Activated CD8-positive, alpha-beta T cell treated with anti-CD3 and anti-CD28 coated beads, Interleukin-2, amount 10 ng/mL, durations not matched to agents 7 days and 5 days (primary cell): ENCODE measurements at regions of chr2 and their contacts with region 1.

Region 1: GRCh38 chr2:27409321-27410073 is at the start of gene PPM1G:
- DNase-seq: peak; percentile 97
- ATAC-seq: peak; percentile 96
- H3K4me3 Mint-ChIP-seq: peak within 1 kb of the TSS; percentile 83
- H3K27ac Mint-ChIP-seq: peak within 1 kb of the TSS; percentile 89
- H3K4me1 Mint-ChIP-seq: peaks cover 34% of the 10 kb centered on the region
- H3K27me3 Mint-ChIP-seq: peaks cover 8% of the 10 kb centered on the region
- total RNA-seq, gene PPM1G: 130 to 136 TPM

Region 2: DNA sequence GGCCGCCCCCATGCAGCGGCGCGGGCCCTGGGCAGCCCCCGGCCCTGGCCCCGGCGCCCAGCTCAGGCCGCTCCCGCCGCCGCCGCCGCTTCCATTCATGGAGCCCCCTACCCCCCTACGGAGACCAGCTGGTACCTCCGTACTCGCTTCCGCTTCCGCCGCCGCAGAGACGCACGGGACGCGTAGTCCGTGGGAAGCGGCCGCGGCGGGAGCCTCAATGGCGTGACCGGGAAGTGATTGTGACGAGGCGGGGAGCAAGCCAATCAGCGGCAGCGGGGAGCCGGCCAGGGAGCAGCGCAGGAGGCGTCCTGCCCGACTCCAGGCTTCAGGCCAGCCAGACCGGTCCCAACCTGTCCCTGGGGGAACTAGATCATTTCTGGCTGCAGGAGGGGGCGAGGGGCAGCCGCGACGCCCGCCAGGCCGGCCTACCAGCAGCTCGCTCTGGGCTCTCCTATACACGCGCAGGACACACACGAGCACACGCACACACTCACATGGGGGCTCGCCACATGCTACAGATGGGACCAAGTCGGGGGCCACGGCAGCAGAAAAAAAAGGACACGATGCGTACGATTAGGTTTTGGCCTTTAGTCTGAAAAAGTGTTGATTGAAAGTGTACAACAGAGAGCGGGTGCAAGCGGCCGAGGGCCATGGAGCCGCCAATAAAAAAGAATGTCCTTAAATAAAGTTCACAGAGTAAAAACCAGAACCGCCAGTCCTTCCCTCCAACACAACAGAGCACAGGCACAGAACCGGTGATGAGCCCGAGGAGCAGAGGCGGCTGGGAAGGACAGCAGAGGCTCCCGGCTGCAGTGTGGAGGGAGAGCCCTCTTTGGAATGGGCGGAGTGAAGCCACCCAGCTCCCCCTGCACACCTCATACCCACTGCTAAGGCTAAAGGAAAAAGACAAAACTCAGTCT is 28.6 kb before region 1 on chr2 and contains the start of gene ZNF513:
- CTCF ChIA-PET with region 1: interaction called, 4 read pairs
- POLR2A ChIA-PET with region 1: interaction called, 15 read pairs
- DNase-seq: peak; percentile 90
- ATAC-seq: peak; percentile 85
- H3K4me3 Mint-ChIP-seq: peak within 1 kb of the TSS; percentile 90
- H3K27ac Mint-ChIP-seq: peak within 1 kb of the TSS; percentile 97
- H3K4me1 Mint-ChIP-seq: peaks cover 33% of the 10 kb centered on the region
- H3K27me3 Mint-ChIP-seq: no peaks in the 10 kb centered on the region
- total RNA-seq, gene ZNF513: 11.8 to 13.3 TPM

Region 3: DNA sequence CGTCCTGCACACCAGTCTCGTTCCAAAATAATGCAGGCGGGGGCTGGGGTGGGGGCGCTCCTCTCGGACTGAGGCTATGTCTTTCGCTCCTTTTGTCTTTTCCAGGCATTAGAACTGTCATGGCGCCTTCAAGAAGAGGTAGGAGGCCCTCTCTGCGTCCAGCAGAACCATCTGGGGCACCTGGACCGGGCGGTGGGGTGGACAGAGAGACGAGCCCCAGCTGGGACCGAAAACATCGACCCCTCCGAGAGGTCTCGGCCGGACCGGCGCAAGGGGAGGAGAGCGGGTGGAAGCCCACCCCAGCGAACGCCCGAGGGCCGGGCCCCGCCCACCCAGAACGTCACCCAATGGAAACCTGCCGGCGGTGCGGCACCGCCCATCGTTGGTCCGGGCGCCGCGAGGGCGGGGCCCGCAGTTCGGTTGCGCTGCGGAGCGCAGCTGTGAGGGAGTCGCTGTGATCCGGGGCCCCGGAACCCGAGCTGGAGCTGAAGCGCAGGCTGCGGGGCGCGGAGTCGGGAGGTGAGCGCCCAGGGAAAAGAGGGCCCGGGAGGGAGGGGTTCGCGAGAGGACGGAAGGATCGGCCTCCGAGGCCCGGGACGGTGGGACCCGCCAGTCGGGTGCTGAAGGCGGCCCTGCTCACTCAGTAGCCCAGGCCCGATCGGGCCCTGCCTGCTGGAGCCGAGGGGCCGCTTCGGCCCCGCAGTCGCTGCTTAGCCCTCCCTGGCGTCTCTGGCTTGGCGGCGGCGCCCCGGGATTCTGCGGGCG is 18.9 kb after region 1 on chr2 and contains the start of gene NRBP1:
- CTCF ChIA-PET with region 1: interaction called, 38 read pairs
- POLR2A ChIA-PET with region 1: interaction called, 41 read pairs
- DNase-seq: peak; percentile 93
- ATAC-seq: peak; percentile 92
- H3K4me3 Mint-ChIP-seq: peak within 1 kb of the TSS; percentile 99
- H3K27ac Mint-ChIP-seq: peak within 1 kb of the TSS; percentile 98
- H3K4me1 Mint-ChIP-seq: peaks cover 31% of the 10 kb centered on the region
- H3K27me3 Mint-ChIP-seq: no peaks in the 10 kb centered on the region
- total RNA-seq, gene NRBP1: 91.2 to 91.3 TPM

Region 4: DNA sequence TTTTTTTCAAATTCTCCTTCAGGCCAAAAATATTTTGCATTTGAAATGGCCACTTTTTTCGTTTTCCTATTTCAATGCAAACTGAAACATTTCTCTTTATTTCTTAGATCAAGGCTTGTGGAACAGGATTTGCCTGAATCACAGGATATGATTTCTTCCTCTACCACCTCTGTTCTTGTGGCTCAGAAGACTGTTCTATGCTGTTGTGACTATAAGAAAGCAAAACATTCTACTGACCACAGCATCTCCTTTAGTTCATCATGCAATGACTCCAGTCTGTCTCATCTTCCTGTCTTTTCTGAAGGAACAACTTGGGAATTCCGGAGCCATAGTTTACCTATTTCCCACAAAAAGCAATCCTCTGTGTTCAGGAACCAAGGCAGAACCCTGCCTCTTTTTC is 157.1 kb after region 1 on chr2:
- CTCF ChIA-PET with region 1: no interaction called
- POLR2A ChIA-PET with region 1: no interaction called
- DNase-seq: no peak
- ATAC-seq: no peak
- H3K4me3 Mint-ChIP-seq: no peak overlapping the region
- H3K27ac Mint-ChIP-seq: no peak overlapping the region
- H3K4me1 Mint-ChIP-seq: no peaks in the 10 kb centered on the region
- H3K27me3 Mint-ChIP-seq: peaks cover 48% of the 10 kb centered on the region